CD8-positive, alpha-beta T cell (primary cell): ENCODE measurements at regions of chr7 and their contacts with region 1.

Region 1: GRCh38 chr7:139080905-139081304 is 28.6 kb downstream of the ZC3HAV1 start:
- DNase-seq: no peak
- ATAC-seq: no peak
- H3K4me3 ChIP-seq: peak overlapping the region in 1 of 2 experiments; percentile 4
- H3K4me3 Mint-ChIP-seq: peak overlapping the region; percentile 58
- H3K27ac ChIP-seq: peak overlapping the region in 1 of 2 experiments; percentile 22
- H3K27ac Mint-ChIP-seq: peak overlapping the region; percentile 66
- H3K4me1 ChIP-seq: peaks cover 87% of the 10 kb centered on the region
- H3K4me1 Mint-ChIP-seq: peaks cover 86% of the 10 kb centered on the region
- H3K27me3 ChIP-seq: no peaks in the 10 kb centered on the region
- H3K27me3 Mint-ChIP-seq: no peaks in the 10 kb centered on the region
- CTCF ChIP-seq: no peak

Region 2: GRCh38 chr7:138999414-138999813 is 81.5 kb before region 1 on chr7:
- CTCF ChIA-PET with region 1: no interaction called
- POLR2A ChIA-PET with region 1: no interaction called
- intact Hi-C with region 1: no loop called
- DNase-seq: no peak
- ATAC-seq: no peak
- H3K4me3 ChIP-seq: no peak overlapping the region
- H3K4me3 Mint-ChIP-seq: no peak overlapping the region
- H3K27ac ChIP-seq: no peak overlapping the region
- H3K27ac Mint-ChIP-seq: no peak overlapping the region
- H3K4me1 ChIP-seq: no peaks in the 10 kb centered on the region
- H3K4me1 Mint-ChIP-seq: peaks cover 5% of the 10 kb centered on the region
- H3K27me3 ChIP-seq: no peaks in the 10 kb centered on the region
- H3K27me3 Mint-ChIP-seq: peaks cover 2% of the 10 kb centered on the region
- CTCF ChIP-seq: no peak

Region 3: DNA sequence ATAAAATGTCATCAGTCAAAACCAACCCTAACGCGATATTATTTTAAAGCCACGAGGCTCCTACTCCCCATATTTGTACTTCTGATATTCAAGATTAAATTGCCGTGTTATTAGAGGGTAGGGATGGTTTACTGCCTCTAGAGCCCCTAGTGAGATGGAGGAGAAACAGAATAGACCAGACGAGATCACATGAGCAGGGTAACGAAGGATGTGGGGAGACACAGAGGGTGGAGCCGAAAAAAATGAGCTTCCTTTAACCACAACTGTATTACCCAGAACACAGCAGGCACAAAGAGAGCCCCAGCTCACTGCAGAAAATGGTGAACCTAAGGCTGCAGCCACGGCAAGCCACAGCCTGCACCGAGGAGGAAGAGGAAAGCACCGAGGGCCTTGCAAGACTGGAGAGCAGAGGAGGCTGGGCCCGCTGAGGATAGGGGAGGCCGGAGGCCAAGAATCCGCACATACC is 14.3 kb after region 1 on chr7:
- CTCF ChIA-PET with region 1: interaction called, 24 read pairs
- POLR2A ChIA-PET with region 1: interaction called, 37 read pairs
- intact Hi-C with region 1: loop called in 1 of 2 experiments (anchors 1 kb)
- DNase-seq: peak; percentile 57 to 96 (median 82)
- ATAC-seq: peak; percentile 84
- H3K4me3 ChIP-seq: peak overlapping the region; percentile 34 to 53
- H3K4me3 Mint-ChIP-seq: peak overlapping the region; percentile 84
- H3K27ac ChIP-seq: peak overlapping the region; percentile 61 to 76
- H3K27ac Mint-ChIP-seq: peak overlapping the region; percentile 95
- H3K4me1 ChIP-seq: peaks cover 82% of the 10 kb centered on the region
- H3K4me1 Mint-ChIP-seq: peaks cover 86% of the 10 kb centered on the region
- H3K27me3 ChIP-seq: no peaks in the 10 kb centered on the region
- H3K27me3 Mint-ChIP-seq: no peaks in the 10 kb centered on the region
- CTCF ChIP-seq: no peak

Region 4: GRCh38 chr7:139109188-139109982 is 28.5 kb after region 1 on chr7 and contains the start of gene ZC3HAV1:
- CTCF ChIA-PET with region 1: interaction called, 10 read pairs
- POLR2A ChIA-PET with region 1: interaction called, 10 read pairs
- intact Hi-C with region 1: loop called in 1 of 2 experiments (anchors 1 kb)
- DNase-seq: peak; percentile 78 to 97 (median 89)
- ATAC-seq: peak; percentile 87
- H3K4me3 ChIP-seq: peak within 1 kb of the TSS; percentile 81 to 99
- H3K4me3 Mint-ChIP-seq: peak within 1 kb of the TSS; percentile 96
- H3K27ac ChIP-seq: peak within 1 kb of the TSS; percentile 97 to 98
- H3K27ac Mint-ChIP-seq: peak within 1 kb of the TSS; percentile 99
- H3K4me1 ChIP-seq: peaks cover 18% of the 10 kb centered on the region
- H3K4me1 Mint-ChIP-seq: peaks cover 42% of the 10 kb centered on the region
- H3K27me3 ChIP-seq: no peaks in the 10 kb centered on the region
- H3K27me3 Mint-ChIP-seq: no peaks in the 10 kb centered on the region
- CTCF ChIP-seq: no peak
- total RNA-seq, gene ZC3HAV1: 194 to 198 TPM

Region 5: GRCh38 chr7:139118234-139118804 is 37.4 kb after region 1 on chr7:
- CTCF ChIA-PET with region 1: interaction called, 10 read pairs
- POLR2A ChIA-PET with region 1: interaction called, 3 read pairs
- intact Hi-C with region 1: loop called in 1 of 2 experiments (anchors 5 kb)
- DNase-seq: peak in 1 of 9 experiments; percentile 21
- ATAC-seq: no peak
- H3K4me3 ChIP-seq: peak overlapping the region in 1 of 2 experiments; percentile 33
- H3K4me3 Mint-ChIP-seq: peak overlapping the region; percentile 43
- H3K27ac ChIP-seq: peak overlapping the region in 1 of 2 experiments; percentile 38
- H3K27ac Mint-ChIP-seq: peak overlapping the region; percentile 88
- H3K4me1 ChIP-seq: peaks cover 27% of the 10 kb centered on the region
- H3K4me1 Mint-ChIP-seq: peaks cover 36% of the 10 kb centered on the region
- H3K27me3 ChIP-seq: no peaks in the 10 kb centered on the region
- H3K27me3 Mint-ChIP-seq: no peaks in the 10 kb centered on the region
- CTCF ChIP-seq: no peak

Region 6: GRCh38 chr7:139230774-139231512 is 150.0 kb after region 1 on chr7 and contains the start of gene UBN2:
- CTCF ChIA-PET with region 1: no interaction called
- POLR2A ChIA-PET with region 1: no interaction called
- intact Hi-C with region 1: no loop called
- DNase-seq: peak; percentile 65 to 96 (median 89)
- ATAC-seq: peak; percentile 72
- H3K4me3 ChIP-seq: peak within 1 kb of the TSS; percentile 73 to 86
- H3K4me3 Mint-ChIP-seq: peak within 1 kb of the TSS; percentile 99
- H3K27ac ChIP-seq: peak within 1 kb of the TSS; percentile 68 to 81
- H3K27ac Mint-ChIP-seq: peak within 1 kb of the TSS; percentile 97
- H3K4me1 ChIP-seq: peaks cover 20% of the 10 kb centered on the region
- H3K4me1 Mint-ChIP-seq: peaks cover 33% of the 10 kb centered on the region
- H3K27me3 ChIP-seq: no peaks in the 10 kb centered on the region
- H3K27me3 Mint-ChIP-seq: peaks cover 5% of the 10 kb centered on the region
- CTCF ChIP-seq: no peak
- total RNA-seq, gene UBN2: 12.2 to 13.0 TPM

Region 7: DNA sequence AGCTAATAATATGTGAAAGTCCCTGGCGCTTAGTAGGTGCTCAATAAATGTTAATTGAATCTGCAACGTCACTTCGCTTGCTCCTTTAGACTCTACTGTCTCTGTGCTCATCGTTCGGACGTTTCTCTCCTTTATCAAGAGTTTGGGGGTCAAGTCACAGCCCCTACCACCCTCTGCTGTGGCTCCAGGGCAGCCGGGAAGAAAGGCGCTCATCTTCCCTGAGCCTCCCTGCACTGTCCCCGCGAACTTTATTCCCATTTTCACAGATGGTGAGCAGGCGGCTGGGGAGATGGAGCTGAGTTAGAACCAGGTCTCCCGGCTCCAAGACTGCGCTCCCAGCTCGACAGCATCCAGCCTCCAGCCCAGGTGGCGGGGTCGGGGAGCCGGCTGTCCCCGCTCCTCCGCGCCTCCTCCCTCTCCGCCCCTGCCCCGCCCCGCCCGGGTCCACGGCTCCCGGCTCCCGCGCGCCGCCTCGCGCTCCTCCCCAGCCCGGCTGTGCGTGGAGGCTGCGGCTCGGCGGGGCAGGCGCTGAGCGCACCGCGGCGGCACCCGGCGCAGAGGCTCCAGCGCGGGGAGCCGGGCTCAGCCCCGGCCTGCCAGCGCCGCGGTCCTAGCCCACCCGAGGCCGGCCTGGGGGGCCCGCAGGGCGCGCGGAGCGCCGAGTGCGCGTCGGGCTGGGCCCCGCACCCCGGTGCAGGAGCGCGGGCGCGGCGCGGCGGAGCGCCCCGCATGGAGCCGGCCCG is 442.5 kb after region 1 on chr7 and contains the start of gene CLEC2L:
- CTCF ChIA-PET with region 1: no interaction called
- POLR2A ChIA-PET with region 1: no interaction called
- intact Hi-C with region 1: no loop called
- DNase-seq: no peak
- ATAC-seq: no peak
- H3K4me3 ChIP-seq: no peak within 1 kb of the TSS
- H3K4me3 Mint-ChIP-seq: peak within 1 kb of the TSS; percentile 47
- H3K27ac ChIP-seq: no peak within 1 kb of the TSS
- H3K27ac Mint-ChIP-seq: no peak within 1 kb of the TSS
- H3K4me1 ChIP-seq: no peaks in the 10 kb centered on the region
- H3K4me1 Mint-ChIP-seq: peaks cover 6% of the 10 kb centered on the region
- H3K27me3 ChIP-seq: peaks cover 5 to 9% of the 10 kb centered on the region in 2 experiments
- H3K27me3 Mint-ChIP-seq: peaks cover 47% of the 10 kb centered on the region
- CTCF ChIP-seq: no peak
- total RNA-seq, gene CLEC2L: not detected